GM12878 (cell line): ENCODE measurements at regions of chr7 and their contacts with region 1.

Region 1: GRCh38 chr7:98021588-98022351 is 31.8 kb upstream of the OCM2 start:
- DNase-seq: no peak
- ATAC-seq: peak; percentile 99
- H3K4me3 ChIP-seq: no peak overlapping the region
- H3K27ac ChIP-seq: no peak overlapping the region
- H3K4me1 ChIP-seq: no peaks in the 10 kb centered on the region
- H3K27me3 ChIP-seq: no peaks in the 10 kb centered on the region; a peak in 1 of 4 replicates
- CTCF ChIP-seq: peak; percentile 88 to 94 (median 92)
- EP300 ChIP-seq: no peak
- POLR2A ChIP-seq: no peak
- RAD21 ChIP-seq: peak; percentile 77

Region 2: GRCh38 chr7:97555857-97556421 is 465.8 kb before region 1 on chr7:
- CTCF ChIA-PET with region 1: no interaction called
- POLR2A ChIA-PET with region 1: no interaction called
- RAD21 ChIA-PET with region 1: no interaction called
- SMC1A ChIA-PET with region 1: no interaction called
- in situ Hi-C with region 1: no loop called
- intact Hi-C with region 1: no loop called
- DNase-seq: no peak
- ATAC-seq: no peak
- H3K4me3 ChIP-seq: no peak overlapping the region
- H3K27ac ChIP-seq: no peak overlapping the region
- H3K4me1 ChIP-seq: no peaks in the 10 kb centered on the region
- H3K27me3 ChIP-seq: no peaks in the 10 kb centered on the region
- CTCF ChIP-seq: no peak
- EP300 ChIP-seq: no peak
- POLR2A ChIP-seq: no peak
- RAD21 ChIP-seq: no peak

Region 3: GRCh38 chr7:98119256-98119918 is 97.6 kb after region 1 on chr7:
- CTCF ChIA-PET with region 1: interaction called, 12 read pairs
- POLR2A ChIA-PET with region 1: no interaction called
- RAD21 ChIA-PET with region 1: no interaction called
- SMC1A ChIA-PET with region 1: interaction called, 4 read pairs
- in situ Hi-C with region 1: no loop called
- intact Hi-C with region 1: no loop called
- DNase-seq: no peak
- ATAC-seq: no peak
- H3K4me3 ChIP-seq: no peak overlapping the region
- H3K27ac ChIP-seq: no peak overlapping the region
- H3K4me1 ChIP-seq: no peaks in the 10 kb centered on the region
- H3K27me3 ChIP-seq: no peaks in the 10 kb centered on the region
- CTCF ChIP-seq: no peak
- EP300 ChIP-seq: no peak
- POLR2A ChIP-seq: no peak
- RAD21 ChIP-seq: no peak

Region 4: GRCh38 chr7:98162758-98163157 is 141.0 kb after region 1 on chr7:
- CTCF ChIA-PET with region 1: interaction called, 450 read pairs
- POLR2A ChIA-PET with region 1: interaction called, 4 read pairs
- RAD21 ChIA-PET with region 1: interaction called, 297 read pairs
- SMC1A ChIA-PET with region 1: interaction called, 195 read pairs
- in situ Hi-C with region 1: loop called (anchors 5 kb)
- intact Hi-C with region 1: no loop called
- DNase-seq: peak; percentile 8
- ATAC-seq: peak; percentile 64
- H3K4me3 ChIP-seq: no peak overlapping the region
- H3K27ac ChIP-seq: no peak overlapping the region
- H3K4me1 ChIP-seq: no peaks in the 10 kb centered on the region
- H3K27me3 ChIP-seq: no peaks in the 10 kb centered on the region
- CTCF ChIP-seq: no peak
- EP300 ChIP-seq: no peak
- POLR2A ChIP-seq: no peak
- RAD21 ChIP-seq: no peak

Region 5: DNA sequence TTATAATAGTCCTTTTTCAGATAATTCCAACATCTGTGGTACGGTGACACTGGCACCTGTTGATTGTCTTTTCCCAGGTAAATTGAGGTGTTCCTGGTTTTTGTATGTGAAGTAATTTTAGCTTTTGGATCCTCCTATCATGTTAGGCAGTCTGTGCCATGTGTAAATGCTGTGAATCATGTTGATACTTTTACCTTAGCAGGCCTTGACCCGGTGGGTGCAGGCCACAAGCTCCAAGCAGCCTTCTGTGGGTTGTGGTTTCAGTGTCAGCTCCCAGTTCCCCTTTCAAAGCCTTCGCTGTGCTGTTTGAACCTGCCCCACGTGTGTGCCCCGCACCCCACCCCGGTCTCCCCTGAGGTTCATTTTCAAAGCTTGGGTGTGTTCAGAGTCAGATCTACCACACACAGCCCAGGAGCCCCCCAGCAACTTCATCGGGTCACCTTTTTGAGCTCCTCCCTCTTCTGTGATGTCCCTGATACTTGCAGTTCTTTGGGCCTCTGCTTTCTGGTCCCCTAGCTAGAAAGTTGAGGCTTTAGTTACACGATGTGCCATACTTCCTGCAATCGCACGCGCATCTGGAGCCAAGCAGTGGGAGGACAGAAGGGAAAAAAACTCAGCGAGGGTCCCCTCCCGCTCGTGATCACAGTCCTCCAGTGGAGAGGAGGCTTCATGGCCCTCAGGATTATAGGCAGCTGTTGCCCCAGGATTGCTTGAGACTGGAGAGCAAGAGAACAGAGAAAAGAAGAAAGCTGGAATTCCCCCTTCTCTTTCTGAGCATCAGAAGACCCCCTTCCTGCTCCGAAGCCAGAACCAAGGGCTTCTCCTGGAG is 180.8 kb after region 1 on chr7:
- CTCF ChIA-PET with region 1: interaction called, 5 read pairs
- POLR2A ChIA-PET with region 1: interaction called, 4 read pairs
- RAD21 ChIA-PET with region 1: interaction called, 18 read pairs
- SMC1A ChIA-PET with region 1: interaction called, 5 read pairs
- in situ Hi-C with region 1: no loop called
- intact Hi-C with region 1: no loop called
- DNase-seq: peak; percentile 94
- ATAC-seq: peak; percentile 94
- H3K4me3 ChIP-seq: peak overlapping the region; percentile 54; the same call in 1 of the 2 replicates
- H3K27ac ChIP-seq: peak overlapping the region; percentile 58
- H3K4me1 ChIP-seq: peaks cover 47% of the 10 kb centered on the region
- H3K27me3 ChIP-seq: no peaks in the 10 kb centered on the region
- CTCF ChIP-seq: no peak
- EP300 ChIP-seq: peak; percentile 95 to 98
- POLR2A ChIP-seq: no peak
- RAD21 ChIP-seq: 0 out of 2 replicates have a peak, but pooled peaks have one; percentile 5

Region 6: DNA sequence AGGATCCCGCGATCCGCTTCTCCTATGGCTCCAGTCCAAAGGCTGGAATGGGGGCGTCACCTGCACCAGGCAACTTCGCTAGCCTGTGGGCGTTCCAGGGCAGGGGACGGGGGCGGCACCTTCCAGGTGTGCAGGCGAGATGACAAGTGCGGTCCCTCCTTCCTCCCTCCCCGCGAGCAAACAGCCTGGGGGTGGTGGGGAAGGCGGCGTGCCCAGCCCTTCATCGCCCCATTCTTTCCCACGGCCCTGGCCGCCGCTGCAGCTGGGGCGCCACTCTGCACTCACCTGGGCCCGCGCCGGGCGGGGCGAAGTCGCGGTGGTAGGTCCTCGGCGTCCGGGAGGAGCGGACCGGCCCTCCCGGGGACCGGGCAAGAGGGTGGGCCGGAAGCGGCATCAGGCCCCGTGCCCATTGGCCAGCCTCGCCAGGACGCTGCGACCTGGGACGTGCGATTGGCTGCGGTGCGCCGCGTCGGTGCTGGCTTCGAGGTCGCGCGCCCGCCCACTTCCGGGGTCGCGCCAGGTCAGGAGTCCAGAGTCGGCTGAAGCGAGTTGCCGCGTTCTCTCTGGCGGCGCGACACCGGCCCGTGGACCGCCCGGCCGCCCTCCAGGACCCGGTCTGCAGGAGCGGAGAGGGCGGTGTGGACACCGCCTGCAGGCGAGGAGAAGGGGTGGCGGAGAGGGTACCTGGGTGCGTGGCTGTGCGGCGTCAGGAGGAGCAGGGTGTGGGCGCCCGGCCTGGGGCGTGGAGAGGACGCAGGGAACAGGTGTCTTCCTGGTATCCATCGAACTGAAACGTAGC is 230.3 kb after region 1 on chr7 and contains the start of gene TECPR1:
- CTCF ChIA-PET with region 1: interaction called, 6 read pairs
- POLR2A ChIA-PET with region 1: interaction called, 6 read pairs
- RAD21 ChIA-PET with region 1: interaction called, 11 read pairs
- SMC1A ChIA-PET with region 1: interaction called, 4 read pairs
- in situ Hi-C with region 1: no loop called
- intact Hi-C with region 1: no loop called
- DNase-seq: peak; percentile 66
- ATAC-seq: peak; percentile 99
- H3K4me3 ChIP-seq: peak within 1 kb of the TSS; percentile 83
- H3K27ac ChIP-seq: peak within 1 kb of the TSS; percentile 59
- H3K4me1 ChIP-seq: peaks cover 10% of the 10 kb centered on the region
- H3K27me3 ChIP-seq: no peaks in the 10 kb centered on the region
- CTCF ChIP-seq: 0 out of 6 replicates have a peak, but pooled peaks of 1 of the 3 experiments have one; percentile 1
- EP300 ChIP-seq: no peak
- POLR2A ChIP-seq: peak; percentile 86
- RAD21 ChIP-seq: no peak
- polyA plus RNA-seq, gene TECPR1: 0.26 to 0.51 TPM

Region 7: GRCh38 chr7:98703916-98704315 is 682.1 kb after region 1 on chr7:
- CTCF ChIA-PET with region 1: no interaction called
- POLR2A ChIA-PET with region 1: no interaction called
- RAD21 ChIA-PET with region 1: no interaction called
- SMC1A ChIA-PET with region 1: no interaction called
- in situ Hi-C with region 1: no loop called
- intact Hi-C with region 1: no loop called
- DNase-seq: no peak
- ATAC-seq: peak; percentile 31
- H3K4me3 ChIP-seq: no peak overlapping the region
- H3K27ac ChIP-seq: no peak overlapping the region
- H3K4me1 ChIP-seq: peaks cover 12% of the 10 kb centered on the region
- H3K27me3 ChIP-seq: no peaks in the 10 kb centered on the region
- CTCF ChIP-seq: no peak
- EP300 ChIP-seq: no peak
- POLR2A ChIP-seq: no peak
- RAD21 ChIP-seq: no peak